ENCODE measurements at regions of chr17 and their contacts with region 1.

Region 1: DNA sequence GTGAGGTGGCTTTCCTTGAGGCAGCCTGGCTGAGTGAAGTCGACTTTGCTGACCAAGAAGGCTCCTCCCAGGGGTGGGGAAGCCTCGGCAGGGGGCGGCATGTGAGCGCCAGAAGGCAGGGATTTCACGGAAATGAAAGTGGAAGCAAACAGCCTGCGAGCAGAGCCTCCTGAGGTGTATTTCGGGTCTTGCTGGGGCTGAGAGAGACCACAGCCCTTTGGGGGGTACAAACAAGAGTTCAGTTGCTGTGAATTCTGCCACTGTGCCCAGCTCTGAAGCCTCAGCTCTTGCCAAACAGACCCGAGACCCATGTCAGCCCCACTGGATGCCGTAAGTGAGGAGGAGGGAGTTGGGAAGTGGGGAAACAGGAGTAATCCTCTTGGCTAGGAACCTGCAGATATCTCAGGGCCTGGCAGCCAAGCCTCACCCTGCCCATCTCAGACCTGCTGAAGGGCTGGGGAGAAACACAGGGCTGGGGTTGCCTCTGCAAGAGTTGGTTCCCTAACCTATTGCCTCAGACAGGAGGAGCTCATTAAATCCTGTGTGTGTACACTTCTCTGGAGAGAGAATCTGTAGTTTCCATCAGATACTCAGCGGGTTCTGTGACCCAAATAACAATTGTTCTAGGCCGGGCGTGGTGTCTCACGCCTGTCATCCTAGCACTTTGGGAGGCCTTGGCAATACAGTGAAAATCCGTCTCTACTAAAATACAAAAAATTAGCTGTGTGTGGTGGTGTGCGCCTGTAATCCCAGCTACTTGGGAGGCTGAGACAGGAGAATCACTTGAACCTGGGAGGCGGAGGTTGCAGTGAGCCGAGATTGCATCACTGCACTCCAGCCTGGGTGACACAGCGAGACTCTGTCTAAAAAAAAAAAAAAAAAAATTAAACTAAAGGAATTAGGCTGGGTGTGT is at the start of gene IFI35:
- DNase-seq: peak; percentile 77 to 91 (median 83)
- ATAC-seq: peak; percentile 99
- H3K4me3 ChIP-seq: peak within 1 kb of the TSS; percentile 93
- H3K4me3 Mint-ChIP-seq: peak within 1 kb of the TSS; percentile 99
- H3K27ac ChIP-seq: peak within 1 kb of the TSS; percentile 75 to 88
- H3K27ac Mint-ChIP-seq: peak within 1 kb of the TSS; percentile 92
- H3K4me1 ChIP-seq: peaks cover 33% of the 10 kb centered on the region
- H3K4me1 Mint-ChIP-seq: peaks cover 18% of the 10 kb centered on the region
- H3K27me3 ChIP-seq: no peaks in the 10 kb centered on the region
- H3K27me3 Mint-ChIP-seq: no peaks in the 10 kb centered on the region
- CTCF ChIP-seq: peak; percentile 72
- total RNA-seq, gene IFI35: 23.0 to 24.7 TPM

Region 2: DNA sequence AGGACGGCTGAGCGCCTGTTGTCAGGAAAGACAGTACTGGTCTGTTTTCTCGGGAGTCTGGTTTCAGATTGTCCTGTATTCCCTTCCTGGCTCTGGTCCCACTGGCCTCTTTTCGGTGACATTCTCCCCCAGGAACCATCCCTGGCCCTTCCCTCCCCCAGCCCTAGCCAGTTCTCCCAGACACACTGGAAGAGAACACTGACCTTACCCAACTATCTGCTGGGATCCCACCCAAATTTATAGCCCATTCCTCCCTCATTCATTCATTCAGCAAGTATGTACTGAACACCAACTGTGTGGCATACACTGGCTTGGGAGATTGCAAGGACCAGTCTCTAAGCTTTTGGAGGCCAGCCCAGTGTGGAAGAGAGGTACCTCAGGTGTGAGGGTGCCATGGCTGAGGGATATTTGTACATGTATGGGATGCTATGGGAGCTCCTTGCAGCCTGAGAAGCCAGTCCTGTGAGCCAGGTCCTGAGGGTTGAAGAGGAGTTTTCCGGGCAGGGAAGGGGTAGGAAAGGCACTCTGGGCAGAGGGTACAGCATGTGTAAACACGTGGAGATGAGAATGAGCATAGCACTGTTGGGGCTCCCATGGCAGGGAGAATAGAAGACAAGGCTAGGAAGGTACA is 23.4 kb after region 1 on chr17:
- CTCF ChIA-PET with region 1: no interaction called
- POLR2A ChIA-PET with region 1: no interaction called
- intact Hi-C with region 1: no loop called
- DNase-seq: no peak
- ATAC-seq: no peak
- H3K4me3 ChIP-seq: no peak overlapping the region
- H3K4me3 Mint-ChIP-seq: no peak overlapping the region
- H3K27ac ChIP-seq: no peak overlapping the region
- H3K27ac Mint-ChIP-seq: no peak overlapping the region
- H3K4me1 ChIP-seq: peaks cover 3% of the 10 kb centered on the region
- H3K4me1 Mint-ChIP-seq: no peaks in the 10 kb centered on the region
- H3K27me3 ChIP-seq: no peaks in the 10 kb centered on the region
- H3K27me3 Mint-ChIP-seq: no peaks in the 10 kb centered on the region
- CTCF ChIP-seq: no peak

Region 3: GRCh38 chr17:43170766-43171585 is 164.1 kb after region 1 on chr17 and contains the start of gene NBR1:
- CTCF ChIA-PET with region 1: interaction called, 5 read pairs
- POLR2A ChIA-PET with region 1: interaction called, 9 read pairs
- intact Hi-C with region 1: loop called in 1 of 2 experiments (anchors 5 kb)
- DNase-seq: peak; percentile 90 to 99 (median 92)
- ATAC-seq: peak; percentile 76
- H3K4me3 ChIP-seq: peak within 1 kb of the TSS; percentile 71
- H3K4me3 Mint-ChIP-seq: no peak within 1 kb of the TSS
- H3K27ac ChIP-seq: peak within 1 kb of the TSS; percentile 98
- H3K27ac Mint-ChIP-seq: no peak within 1 kb of the TSS
- H3K4me1 ChIP-seq: peaks cover 47% of the 10 kb centered on the region
- H3K4me1 Mint-ChIP-seq: peaks cover 27% of the 10 kb centered on the region
- H3K27me3 ChIP-seq: no peaks in the 10 kb centered on the region
- H3K27me3 Mint-ChIP-seq: no peaks in the 10 kb centered on the region
- CTCF ChIP-seq: no peak
- total RNA-seq, gene NBR1: 23.7 TPM

Region 4: GRCh38 chr17:43330876-43331639 is 324.2 kb after region 1 on chr17:
- CTCF ChIA-PET with region 1: no interaction called
- POLR2A ChIA-PET with region 1: no interaction called
- intact Hi-C with region 1: loop called in 1 of 2 experiments (anchors 1 kb)
- DNase-seq: no peak
- ATAC-seq: no peak
- H3K4me3 ChIP-seq: no peak overlapping the region
- H3K4me3 Mint-ChIP-seq: no peak overlapping the region
- H3K27ac ChIP-seq: no peak overlapping the region
- H3K27ac Mint-ChIP-seq: no peak overlapping the region
- H3K4me1 ChIP-seq: peaks cover 8% of the 10 kb centered on the region
- H3K4me1 Mint-ChIP-seq: peaks cover 7% of the 10 kb centered on the region
- H3K27me3 ChIP-seq: peaks cover 0 to 5% of the 10 kb centered on the region in 2 experiments
- H3K27me3 Mint-ChIP-seq: peaks cover 18% of the 10 kb centered on the region
- CTCF ChIP-seq: no peak

Region 5: DNA sequence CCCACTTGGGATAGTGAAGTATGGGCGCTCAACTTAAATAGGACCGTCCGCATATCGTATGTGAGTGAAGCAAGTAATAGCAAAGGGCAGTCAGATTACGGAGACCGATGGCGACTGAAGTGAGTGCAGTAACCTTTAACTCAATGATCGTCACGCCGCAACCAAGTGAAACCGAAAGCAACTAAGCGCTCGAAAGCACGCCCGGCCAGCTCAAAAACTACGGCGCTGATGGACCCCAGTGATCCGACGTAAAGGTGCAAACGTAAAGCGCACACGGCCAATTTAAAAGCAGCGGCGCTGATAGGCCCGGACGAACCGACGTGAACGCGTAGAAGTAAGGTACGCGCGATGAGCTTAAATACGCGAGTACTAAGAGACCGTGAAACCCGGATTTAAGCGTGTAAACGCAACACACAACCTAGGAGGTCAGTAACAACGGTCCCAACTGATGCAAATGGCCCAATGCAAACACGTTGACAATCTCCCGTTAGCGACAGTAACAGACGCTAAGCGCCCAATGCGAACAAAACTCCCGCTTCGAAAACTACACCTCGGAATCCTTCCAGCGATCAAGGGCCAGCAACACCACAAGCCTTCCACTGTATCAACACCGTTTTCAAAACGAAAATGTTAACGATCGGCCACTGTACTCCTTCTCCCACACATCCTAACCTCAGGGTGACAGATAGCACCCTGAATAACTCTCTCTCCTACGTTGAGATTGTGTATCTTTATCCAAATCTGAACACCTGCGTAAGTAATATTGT is 354.0 kb after region 1 on chr17:
- CTCF ChIA-PET with region 1: no interaction called
- POLR2A ChIA-PET with region 1: interaction called, 10 read pairs
- intact Hi-C with region 1: no loop called
- DNase-seq: peak; percentile 74 to 99 (median 86)
- ATAC-seq: peak; percentile 75
- H3K4me3 ChIP-seq: peak overlapping the region; percentile 63
- H3K4me3 Mint-ChIP-seq: peak overlapping the region; percentile 93
- H3K27ac ChIP-seq: peak overlapping the region; percentile 94 to 96
- H3K27ac Mint-ChIP-seq: peak overlapping the region; percentile 97
- H3K4me1 ChIP-seq: peaks cover 22% of the 10 kb centered on the region
- H3K4me1 Mint-ChIP-seq: peaks cover 15% of the 10 kb centered on the region
- H3K27me3 ChIP-seq: no peaks in the 10 kb centered on the region
- H3K27me3 Mint-ChIP-seq: peaks cover 5% of the 10 kb centered on the region
- CTCF ChIP-seq: no peak

Measured in CD4-positive, alpha-beta T cell (primary cell).